T-cell (primary cell): ENCODE measurements at regions of chr6 and their contacts with region 1.

Region 1: GRCh38 chr6:22656706-22657351 is 87.5 kb downstream of the HDGFL1 start:
- DNase-seq: no peak
- ATAC-seq: no peak
- H3K4me3 ChIP-seq: no peak overlapping the region
- H3K4me3 Mint-ChIP-seq: no peak overlapping the region
- H3K27ac ChIP-seq: no peak overlapping the region
- H3K27ac Mint-ChIP-seq: no peak overlapping the region
- H3K4me1 ChIP-seq: no peaks in the 10 kb centered on the region
- H3K4me1 Mint-ChIP-seq: no peaks in the 10 kb centered on the region
- H3K27me3 ChIP-seq: no peaks in the 10 kb centered on the region
- H3K27me3 Mint-ChIP-seq: no peaks in the 10 kb centered on the region

Region 2: GRCh38 chr6:21710908-21711627 is 945.8 kb before region 1 on chr6:
- CTCF ChIA-PET with region 1: interaction called in 1 of 2 experiments, 10 read pairs
- POLR2A ChIA-PET with region 1: no interaction called
- DNase-seq: no peak
- ATAC-seq: no peak
- H3K4me3 ChIP-seq: no peak overlapping the region
- H3K4me3 Mint-ChIP-seq: no peak overlapping the region
- H3K27ac ChIP-seq: no peak overlapping the region
- H3K27ac Mint-ChIP-seq: no peak overlapping the region
- H3K4me1 ChIP-seq: no peaks in the 10 kb centered on the region
- H3K4me1 Mint-ChIP-seq: no peaks in the 10 kb centered on the region
- H3K27me3 ChIP-seq: peaks cover 0 to 3% of the 10 kb centered on the region in 2 experiments
- H3K27me3 Mint-ChIP-seq: peaks cover 0 to 13% of the 10 kb centered on the region in 2 donors